ENCODE measurements at regions of chr13 and their contacts with region 1.

Region 1: DNA sequence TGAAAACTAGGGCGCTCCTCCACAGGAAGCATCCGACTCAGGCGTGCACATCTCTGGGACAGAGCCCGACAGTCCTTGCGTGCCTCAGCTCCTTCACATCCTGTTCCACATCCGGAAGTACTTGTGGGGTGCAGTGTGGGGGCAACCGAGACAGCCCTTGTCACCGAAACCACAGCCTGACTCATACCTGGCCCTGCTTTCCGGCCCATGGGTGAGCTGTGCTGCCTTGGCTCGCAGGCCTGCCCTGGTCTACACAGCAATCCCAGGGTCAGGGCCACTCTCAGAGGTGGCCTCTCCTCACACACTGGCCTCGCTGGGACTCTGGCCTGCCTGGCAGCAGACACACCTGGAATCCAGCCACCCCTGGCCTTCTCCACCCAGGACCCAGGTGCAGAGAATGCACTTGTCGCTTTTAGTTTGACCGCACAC is 100.4 kb downstream of the STK24 start:
- DNase-seq: peak; percentile 84 to 97 (median 86)
- H3K4me3 ChIP-seq: peak overlapping the region; percentile 1 to 21
- H3K4me3 Mint-ChIP-seq: peak overlapping the region; percentile 63 to 80 (median 74)
- H3K27ac ChIP-seq: peak overlapping the region; percentile 78
- H3K27ac Mint-ChIP-seq: peak overlapping the region; percentile 83 to 98 (median 96)
- H3K4me1 ChIP-seq: peaks cover 58% of the 10 kb centered on the region
- H3K4me1 Mint-ChIP-seq: peaks cover 51 to 69% (median 61%) of the 10 kb centered on the region in 4 donors
- H3K27me3 ChIP-seq: no peaks in the 10 kb centered on the region
- H3K27me3 Mint-ChIP-seq: no peaks in the 10 kb centered on the region

Region 2: DNA sequence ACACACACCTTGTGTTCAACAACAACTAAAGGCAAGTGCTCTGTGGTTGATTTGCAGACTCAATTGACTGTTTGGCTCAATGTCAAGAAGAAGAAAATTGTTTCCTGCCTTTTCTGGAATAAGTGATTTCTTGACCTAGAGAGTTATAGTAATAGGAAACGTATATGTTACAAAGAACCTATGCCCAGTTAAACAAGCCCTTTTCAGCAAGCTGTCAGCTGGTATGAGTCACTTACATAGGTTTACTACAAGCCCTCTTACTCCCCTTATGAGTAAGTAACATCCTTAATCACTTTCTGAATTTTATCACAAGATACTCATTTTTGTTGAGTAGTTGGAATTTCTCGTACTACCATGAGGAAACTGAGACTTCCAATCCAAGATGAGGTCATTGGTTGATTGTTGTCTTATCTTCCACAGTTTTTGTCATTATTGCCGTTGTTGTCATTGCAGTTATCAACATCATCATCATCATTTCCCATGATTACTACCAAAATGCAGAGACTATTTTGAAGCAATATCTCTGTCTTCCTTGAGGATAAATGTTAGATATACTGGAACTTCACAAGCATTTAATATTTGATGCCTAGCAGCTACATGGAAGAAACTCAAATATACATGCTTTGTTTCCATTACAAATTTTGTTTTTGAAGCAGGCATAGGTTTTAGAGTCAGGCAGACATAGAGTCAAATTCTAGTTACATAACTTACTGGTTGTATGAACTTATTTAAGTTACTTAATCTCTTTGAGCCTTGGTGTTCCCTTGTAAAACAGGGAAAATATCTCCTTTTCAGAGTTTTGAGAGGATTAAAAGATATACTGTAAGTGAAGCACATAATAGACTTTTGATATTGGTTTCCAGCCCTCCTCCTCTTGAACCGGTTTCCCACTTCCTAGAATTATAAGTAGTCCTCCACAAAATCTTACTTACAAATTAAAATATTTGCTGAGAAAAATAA is 936.6 kb before region 1 on chr13:
- CTCF ChIA-PET with region 1: no interaction called
- POLR2A ChIA-PET with region 1: no interaction called
- intact Hi-C with region 1: no loop called
- DNase-seq: no peak
- H3K4me3 ChIP-seq: no peak overlapping the region
- H3K4me3 Mint-ChIP-seq: no peak overlapping the region
- H3K27ac ChIP-seq: no peak overlapping the region
- H3K27ac Mint-ChIP-seq: no peak overlapping the region
- H3K4me1 ChIP-seq: no peaks in the 10 kb centered on the region
- H3K4me1 Mint-ChIP-seq: no peaks in the 10 kb centered on the region
- H3K27me3 ChIP-seq: no peaks in the 10 kb centered on the region
- H3K27me3 Mint-ChIP-seq: peaks cover 1% of the 10 kb centered on the region in 2 donors

Region 3: DNA sequence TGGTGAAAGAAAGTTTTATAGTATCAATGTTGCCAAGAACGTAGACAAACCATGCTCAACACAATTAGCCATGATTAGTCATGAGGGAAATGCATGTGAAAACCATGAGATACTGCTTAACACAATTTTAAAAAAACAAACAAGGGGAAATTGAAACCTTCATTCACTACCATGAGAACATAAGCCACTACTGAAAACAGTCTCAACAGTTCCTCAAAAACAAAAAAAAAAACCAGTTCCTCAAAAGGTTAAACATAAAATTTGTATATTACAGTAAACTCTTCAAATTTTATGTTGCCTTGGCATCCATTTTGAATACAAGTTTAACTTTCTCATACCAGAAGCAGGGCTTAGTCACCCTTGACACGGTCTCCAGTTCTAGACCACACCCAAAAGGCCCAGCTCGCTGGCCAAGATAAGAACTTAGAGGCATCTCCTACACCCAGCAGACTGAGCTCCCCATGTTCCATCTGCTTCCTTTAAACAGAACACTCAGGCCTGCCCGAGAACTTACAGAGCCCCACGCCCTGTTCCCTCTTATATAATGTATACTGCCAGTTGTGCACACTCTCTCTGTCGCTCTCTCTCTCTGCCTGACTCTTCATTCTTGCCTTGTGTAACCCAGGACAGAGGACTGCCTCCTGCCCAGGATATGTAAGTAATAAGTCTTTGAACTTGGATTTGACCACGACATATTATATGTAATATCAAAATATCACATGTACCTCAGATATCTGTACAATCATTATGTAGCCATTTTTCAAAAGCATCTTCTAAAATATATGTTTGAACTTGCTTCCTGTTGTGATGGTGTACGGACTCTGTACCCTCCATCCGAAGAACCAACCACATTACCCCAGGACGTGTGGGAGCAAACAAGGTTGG is 33.0 kb after region 1 on chr13:
- CTCF ChIA-PET with region 1: no interaction called
- POLR2A ChIA-PET with region 1: interaction called, 11 read pairs
- intact Hi-C with region 1: no loop called
- DNase-seq: peak in 4 of 5 donors; percentile 22 to 74 (median 38)
- H3K4me3 ChIP-seq: no peak overlapping the region
- H3K4me3 Mint-ChIP-seq: peak overlapping the region in 7 of 8 donors; percentile 33 to 78 (median 64)
- H3K27ac ChIP-seq: peak overlapping the region; percentile 36
- H3K27ac Mint-ChIP-seq: peak overlapping the region; percentile 80 to 95 (median 87)
- H3K4me1 ChIP-seq: peaks cover 100% of the 10 kb centered on the region
- H3K4me1 Mint-ChIP-seq: peaks cover 73 to 100% (median 89%) of the 10 kb centered on the region in 4 donors
- H3K27me3 ChIP-seq: no peaks in the 10 kb centered on the region
- H3K27me3 Mint-ChIP-seq: no peaks in the 10 kb centered on the region

Region 4: GRCh38 chr13:98565726-98566565 is 89.4 kb after region 1 on chr13:
- CTCF ChIA-PET with region 1: interaction called, 5 read pairs
- POLR2A ChIA-PET with region 1: interaction called, 27 read pairs
- intact Hi-C with region 1: loop called (anchors 1 kb)
- DNase-seq: no peak
- H3K4me3 ChIP-seq: peak overlapping the region; percentile 4 to 39
- H3K4me3 Mint-ChIP-seq: peak overlapping the region; percentile 63 to 97 (median 86)
- H3K27ac ChIP-seq: peak overlapping the region; percentile 81
- H3K27ac Mint-ChIP-seq: peak overlapping the region; percentile 94 to 98 (median 97)
- H3K4me1 ChIP-seq: peaks cover 93% of the 10 kb centered on the region
- H3K4me1 Mint-ChIP-seq: peaks cover 72 to 98% (median 85%) of the 10 kb centered on the region in 4 donors
- H3K27me3 ChIP-seq: no peaks in the 10 kb centered on the region
- H3K27me3 Mint-ChIP-seq: no peaks in the 10 kb centered on the region

Region 5: DNA sequence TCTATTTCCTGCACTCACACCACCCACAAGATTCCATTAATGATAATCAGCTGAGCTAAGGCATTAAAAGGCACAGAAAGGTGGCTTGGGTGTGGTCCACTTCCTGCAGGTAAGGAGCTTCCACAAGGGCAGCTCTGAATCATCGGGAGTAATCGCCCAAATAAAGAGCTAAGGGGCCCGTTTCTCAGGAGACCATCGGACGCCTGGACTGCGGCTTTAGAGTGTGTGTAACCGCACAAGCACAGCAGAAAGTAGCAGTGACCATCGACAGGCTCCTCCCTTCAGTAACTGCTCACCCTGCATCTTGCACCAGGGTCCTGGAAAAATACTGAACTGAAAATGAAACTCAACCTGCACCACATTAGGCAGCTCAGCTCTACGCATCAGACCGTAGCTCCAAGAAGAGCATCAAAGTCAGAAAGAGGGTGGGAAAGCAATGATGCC is 94.4 kb after region 1 on chr13:
- CTCF ChIA-PET with region 1: interaction called, 5 read pairs
- POLR2A ChIA-PET with region 1: interaction called, 27 read pairs
- intact Hi-C with region 1: loop called (anchors 1 kb)
- DNase-seq: peak; percentile 50 to 75 (median 61)
- H3K4me3 ChIP-seq: peak overlapping the region; percentile 77 to 90
- H3K4me3 Mint-ChIP-seq: peak overlapping the region; percentile 86 to 97 (median 94)
- H3K27ac ChIP-seq: peak overlapping the region; percentile 81
- H3K27ac Mint-ChIP-seq: peak overlapping the region; percentile 95 to 98 (median 98)
- H3K4me1 ChIP-seq: peaks cover 96% of the 10 kb centered on the region
- H3K4me1 Mint-ChIP-seq: peaks cover 70 to 99% (median 85%) of the 10 kb centered on the region in 4 donors
- H3K27me3 ChIP-seq: no peaks in the 10 kb centered on the region
- H3K27me3 Mint-ChIP-seq: no peaks in the 10 kb centered on the region

Region 6: GRCh38 chr13:98576963-98577822 is 100.6 kb after region 1 on chr13 and contains the start of gene STK24:
- CTCF ChIA-PET with region 1: interaction called, 3 read pairs
- POLR2A ChIA-PET with region 1: interaction called, 27 read pairs
- intact Hi-C with region 1: loop called (anchors 1 kb)
- DNase-seq: peak; percentile 52 to 73 (median 56)
- H3K4me3 ChIP-seq: peak within 1 kb of the TSS; percentile 74 to 75
- H3K4me3 Mint-ChIP-seq: peak within 1 kb of the TSS; percentile 89 to 97 (median 95)
- H3K27ac ChIP-seq: peak within 1 kb of the TSS; percentile 81
- H3K27ac Mint-ChIP-seq: peak within 1 kb of the TSS; percentile 92 to 97 (median 95)
- H3K4me1 ChIP-seq: peaks cover 34% of the 10 kb centered on the region
- H3K4me1 Mint-ChIP-seq: peaks cover 21 to 42% (median 33%) of the 10 kb centered on the region in 4 donors
- H3K27me3 ChIP-seq: no peaks in the 10 kb centered on the region
- H3K27me3 Mint-ChIP-seq: no peaks in the 10 kb centered on the region
- total RNA-seq, gene STK24: 146 to 147 TPM

Region 7: GRCh38 chr13:99356158-99357091 is 879.9 kb after region 1 on chr13:
- CTCF ChIA-PET with region 1: no interaction called
- POLR2A ChIA-PET with region 1: no interaction called
- intact Hi-C with region 1: no loop called
- DNase-seq: peak; percentile 88 to 95 (median 92)
- H3K4me3 ChIP-seq: peak overlapping the region; percentile 13 to 37
- H3K4me3 Mint-ChIP-seq: peak overlapping the region; percentile 30 to 82 (median 73)
- H3K27ac ChIP-seq: peak overlapping the region; percentile 94
- H3K27ac Mint-ChIP-seq: peak overlapping the region; percentile 96 to 100 (median 99)
- H3K4me1 ChIP-seq: peaks cover 98% of the 10 kb centered on the region
- H3K4me1 Mint-ChIP-seq: peaks cover 90 to 100% (median 96%) of the 10 kb centered on the region in 4 donors
- H3K27me3 ChIP-seq: no peaks in the 10 kb centered on the region
- H3K27me3 Mint-ChIP-seq: no peaks in the 10 kb centered on the region

Measured in CD4-positive, alpha-beta memory T cell (primary cell).